Natural killer cell (primary cell): ENCODE measurements at regions of chr3 and their contacts with region 1.

Region 1: DNA sequence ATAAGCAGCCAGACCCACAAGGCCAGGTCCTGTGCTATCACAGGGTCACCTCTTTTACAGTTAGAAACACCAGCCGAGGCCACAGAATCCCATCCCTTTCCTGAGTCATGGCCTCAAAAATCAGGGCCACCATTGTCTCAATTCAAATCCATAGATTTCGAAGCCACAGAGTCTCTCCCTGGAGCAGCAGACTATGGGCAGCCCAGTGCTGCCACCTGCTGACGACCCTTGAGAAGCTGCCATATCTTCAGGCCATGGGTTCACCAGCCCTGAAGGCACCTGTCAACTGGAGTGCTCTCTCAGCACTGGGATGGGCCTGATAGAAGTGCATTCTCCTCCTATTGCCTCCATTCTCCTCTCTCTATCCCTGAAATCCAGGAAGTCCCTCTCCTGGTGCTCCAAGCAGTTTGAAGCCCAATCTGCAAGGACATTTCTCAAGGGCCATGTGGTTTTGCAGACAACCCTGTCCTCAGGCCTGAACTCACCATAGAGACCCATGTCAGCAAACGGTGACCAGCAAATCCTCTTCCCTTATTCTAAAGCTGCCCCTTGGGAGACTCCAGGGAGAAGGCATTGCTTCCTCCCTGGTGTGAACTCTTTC is 39.6 kb downstream of the TGM4 start:
- DNase-seq: peak; percentile 59 to 82
- ATAC-seq: peak; percentile 68 to 90 (median 77)
- H3K4me3 ChIP-seq: no peak overlapping the region
- H3K4me3 Mint-ChIP-seq: no peak overlapping the region
- H3K27ac ChIP-seq: no peak overlapping the region
- H3K27ac Mint-ChIP-seq: no peak overlapping the region
- H3K4me1 ChIP-seq: no peaks in the 10 kb centered on the region
- H3K4me1 Mint-ChIP-seq: peaks cover 0 to 10% of the 10 kb centered on the region in 2 donors
- H3K27me3 ChIP-seq: peaks cover 3% of the 10 kb centered on the region
- H3K27me3 Mint-ChIP-seq: peaks cover 0 to 12% of the 10 kb centered on the region in 2 donors
- CTCF ChIP-seq: peak; percentile 73

Region 2: DNA sequence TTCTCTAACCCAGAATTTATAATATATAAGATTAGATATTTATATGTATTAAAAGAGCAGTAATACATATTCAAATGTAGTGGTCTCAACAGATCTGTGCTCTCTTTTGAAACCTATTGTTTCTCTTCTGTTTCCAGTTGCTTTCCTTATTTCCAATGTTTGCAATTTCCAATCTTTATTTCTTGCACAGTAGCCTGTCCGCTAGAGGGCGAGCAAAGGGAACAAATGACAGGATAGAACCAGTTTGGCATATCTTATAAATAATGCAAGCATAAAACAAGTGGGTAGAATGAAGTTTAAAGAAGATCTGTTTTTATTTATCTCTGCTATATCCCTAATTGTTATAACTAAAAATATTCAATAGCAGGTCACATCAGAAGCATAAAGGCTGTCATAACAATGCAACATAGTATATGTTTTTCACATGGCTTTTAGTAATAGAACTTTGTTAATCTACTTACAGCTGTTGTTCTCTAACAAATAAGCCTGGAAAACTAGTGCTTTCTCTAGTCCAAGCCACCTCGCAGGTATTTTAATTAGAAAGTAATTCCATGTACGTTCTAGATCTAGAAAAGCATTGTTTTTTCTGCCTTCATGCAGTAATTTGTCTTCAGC is 590.5 kb before region 1 on chr3:
- intact Hi-C with region 1: loop called (anchors 2 kb)
- DNase-seq: peak; percentile 24 to 74
- ATAC-seq: peak in 2 of 3 donors; percentile 59 to 66
- H3K4me3 ChIP-seq: no peak overlapping the region
- H3K4me3 Mint-ChIP-seq: no peak overlapping the region
- H3K27ac ChIP-seq: no peak overlapping the region
- H3K27ac Mint-ChIP-seq: no peak overlapping the region
- H3K4me1 ChIP-seq: peaks cover 3% of the 10 kb centered on the region
- H3K4me1 Mint-ChIP-seq: no peaks in the 10 kb centered on the region
- H3K27me3 ChIP-seq: peaks cover 2% of the 10 kb centered on the region
- H3K27me3 Mint-ChIP-seq: peaks cover 11 to 35% of the 10 kb centered on the region in 2 donors
- CTCF ChIP-seq: peak; percentile 84

Region 3: GRCh38 chr3:44529927-44530326 is 384.0 kb before region 1 on chr3:
- intact Hi-C with region 1: loop called (anchors 1 kb)
- DNase-seq: peak in 1 of 2 donors; percentile 30
- ATAC-seq: no peak
- H3K4me3 ChIP-seq: no peak overlapping the region
- H3K4me3 Mint-ChIP-seq: no peak overlapping the region
- H3K27ac ChIP-seq: no peak overlapping the region
- H3K27ac Mint-ChIP-seq: no peak overlapping the region
- H3K4me1 ChIP-seq: no peaks in the 10 kb centered on the region
- H3K4me1 Mint-ChIP-seq: peaks cover 0 to 5% of the 10 kb centered on the region in 2 donors
- H3K27me3 ChIP-seq: peaks cover 2% of the 10 kb centered on the region
- H3K27me3 Mint-ChIP-seq: peaks cover 13 to 22% of the 10 kb centered on the region in 2 donors
- CTCF ChIP-seq: no peak